A673 (cell line): ENCODE measurements at regions of chr22 and their contacts with region 1.

Region 1: DNA sequence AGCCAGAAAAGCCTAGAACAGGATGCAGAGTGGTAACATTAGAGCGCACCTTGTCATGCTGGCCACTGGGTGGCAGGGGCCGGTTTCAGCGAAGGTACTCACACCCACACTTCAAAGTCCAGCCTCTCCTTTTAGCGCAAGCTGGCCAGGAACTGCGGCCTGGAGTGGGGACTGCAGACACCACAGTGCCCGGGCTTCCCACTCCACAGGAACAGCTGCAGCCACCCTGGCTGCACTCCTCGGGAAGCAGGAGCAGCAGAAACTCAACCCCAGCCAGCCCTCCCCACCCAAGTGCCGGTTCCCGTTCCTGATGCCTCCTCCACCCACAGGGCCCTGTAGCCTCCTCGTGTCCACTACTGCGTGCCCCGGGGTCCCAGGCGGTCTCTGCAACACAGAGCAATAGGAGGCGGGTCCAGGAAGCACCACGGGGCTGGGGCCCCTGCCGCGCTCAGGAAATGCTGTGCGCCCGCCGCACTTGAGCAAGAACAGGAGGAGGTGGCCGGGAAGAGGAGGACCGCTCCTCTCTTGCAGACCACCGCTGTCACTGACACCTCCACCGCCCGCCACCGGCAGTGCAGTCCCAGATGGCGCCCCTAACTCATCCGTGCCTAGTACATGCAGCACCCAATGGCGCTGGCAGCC is 2.2 kb downstream of the RFPL2 start:
- DNase-seq: peak; percentile 48
- H3K4me3 ChIP-seq: peak overlapping the region; percentile 46
- H3K27ac ChIP-seq: no peak overlapping the region
- H3K4me1 ChIP-seq: peaks cover 4% of the 10 kb centered on the region
- H3K27me3 ChIP-seq: peaks cover 18% of the 10 kb centered on the region
- CTCF ChIP-seq: peak; percentile 64

Region 2: DNA sequence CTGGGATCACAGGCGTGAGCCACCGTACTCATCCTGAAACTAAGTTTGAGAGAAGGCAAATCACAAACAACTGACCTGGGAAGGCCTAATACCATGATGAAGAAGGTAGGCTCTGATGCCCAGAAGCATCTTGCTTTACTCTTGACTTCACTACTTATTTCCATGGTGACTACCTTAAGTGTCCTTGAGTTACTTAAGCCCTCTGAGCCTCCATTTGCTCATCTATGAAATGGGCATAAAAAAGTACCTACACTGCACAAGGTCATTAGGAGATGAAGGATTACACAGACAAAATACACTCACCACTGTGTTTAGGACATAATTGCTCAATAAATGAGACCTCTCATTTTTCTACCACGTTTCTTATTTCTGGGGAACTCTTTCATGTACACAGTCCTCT is 741.0 kb before region 1 on chr22:
- CTCF ChIA-PET with region 1: no interaction called
- POLR2A ChIA-PET with region 1: interaction called, 14 read pairs
- intact Hi-C with region 1: no loop called
- DNase-seq: no peak
- H3K4me3 ChIP-seq: no peak overlapping the region
- H3K27ac ChIP-seq: no peak overlapping the region
- H3K4me1 ChIP-seq: no peaks in the 10 kb centered on the region
- H3K27me3 ChIP-seq: no peaks in the 10 kb centered on the region
- CTCF ChIP-seq: no peak

Region 3: GRCh38 chr22:31970490-31971444 is 231.9 kb before region 1 on chr22:
- CTCF ChIA-PET with region 1: no interaction called
- POLR2A ChIA-PET with region 1: no interaction called
- intact Hi-C with region 1: loop called (anchors 10 kb)
- DNase-seq: peak; percentile 90
- H3K4me3 ChIP-seq: peak overlapping the region; percentile 52
- H3K27ac ChIP-seq: no peak overlapping the region
- H3K4me1 ChIP-seq: no peaks in the 10 kb centered on the region
- H3K27me3 ChIP-seq: no peaks in the 10 kb centered on the region
- CTCF ChIP-seq: peak; percentile 90

Region 4: GRCh38 chr22:32218470-32218869 is 15.8 kb after region 1 on chr22:
- CTCF ChIA-PET with region 1: no interaction called
- POLR2A ChIA-PET with region 1: no interaction called
- intact Hi-C with region 1: no loop called
- DNase-seq: no peak
- H3K4me3 ChIP-seq: no peak overlapping the region
- H3K27ac ChIP-seq: no peak overlapping the region
- H3K4me1 ChIP-seq: no peaks in the 10 kb centered on the region
- H3K27me3 ChIP-seq: no peaks in the 10 kb centered on the region
- CTCF ChIP-seq: no peak

Region 5: GRCh38 chr22:32265882-32266767 is 63.5 kb after region 1 on chr22:
- CTCF ChIA-PET with region 1: interaction called, 4 read pairs
- POLR2A ChIA-PET with region 1: no interaction called
- intact Hi-C with region 1: loop called (anchors 1 kb)
- DNase-seq: peak; percentile 87
- H3K4me3 ChIP-seq: no peak overlapping the region
- H3K27ac ChIP-seq: no peak overlapping the region
- H3K4me1 ChIP-seq: no peaks in the 10 kb centered on the region
- H3K27me3 ChIP-seq: no peaks in the 10 kb centered on the region
- CTCF ChIP-seq: peak; percentile 92

Region 6: DNA sequence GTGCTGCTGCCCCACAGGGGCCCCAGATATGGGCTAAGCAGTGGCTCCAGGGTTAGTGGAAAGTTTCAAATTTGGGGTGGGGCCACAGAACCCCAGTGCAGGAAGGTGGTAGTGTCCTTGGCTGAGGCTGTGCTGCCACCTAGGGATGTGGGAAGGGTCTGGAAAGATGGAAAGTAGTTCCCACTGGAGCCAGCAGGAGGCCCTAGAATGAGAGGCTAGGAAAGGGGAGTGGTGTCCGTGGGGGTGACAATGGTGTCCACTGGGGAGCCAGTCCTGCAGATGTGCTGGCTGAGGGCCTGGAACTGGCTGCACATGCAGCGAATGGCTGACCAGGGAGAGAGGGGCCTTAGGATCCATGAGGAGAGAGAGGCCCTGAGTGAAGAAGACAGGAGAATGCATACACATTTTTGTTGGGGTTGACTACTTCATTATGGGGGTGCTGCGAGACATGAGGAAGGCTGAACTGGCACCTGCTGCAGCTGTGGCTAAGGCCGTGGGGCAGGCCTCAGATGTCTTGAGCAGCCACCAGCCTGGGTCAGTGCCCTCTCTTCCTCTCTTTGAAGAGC is 176.1 kb after region 1 on chr22:
- CTCF ChIA-PET with region 1: no interaction called
- POLR2A ChIA-PET with region 1: no interaction called
- intact Hi-C with region 1: loop called (anchors 2 kb)
- DNase-seq: peak; percentile 75
- H3K4me3 ChIP-seq: no peak overlapping the region
- H3K27ac ChIP-seq: no peak overlapping the region
- H3K4me1 ChIP-seq: no peaks in the 10 kb centered on the region
- H3K27me3 ChIP-seq: no peaks in the 10 kb centered on the region
- CTCF ChIP-seq: peak; percentile 93